ENCODE measurements at regions of chr11 and their contacts with region 1.

Region 1: DNA sequence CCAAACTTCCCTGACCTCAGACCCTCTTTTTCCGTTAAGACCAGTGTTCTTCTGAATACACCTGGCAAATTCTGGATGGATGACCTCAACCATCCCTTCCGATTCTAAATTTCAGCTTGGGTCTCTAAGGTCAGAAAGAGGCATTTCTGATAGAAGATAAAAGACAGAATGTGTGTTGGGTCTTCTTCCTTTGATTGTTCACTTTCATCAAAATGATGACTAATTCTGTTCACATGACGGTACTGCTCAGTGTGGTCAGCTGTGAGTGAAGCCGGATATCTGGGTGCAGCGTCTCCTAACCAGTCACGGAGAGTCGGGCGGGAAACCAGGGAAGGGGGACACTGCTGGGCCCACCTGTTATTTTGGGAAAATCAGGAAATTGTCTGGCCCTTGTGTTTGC is 151.6 kb upstream of the NAV2 start:
- DNase-seq: no peak
- H3K4me3 ChIP-seq: no peak overlapping the region
- H3K27ac ChIP-seq: no peak overlapping the region
- H3K4me1 ChIP-seq: no peaks in the 10 kb centered on the region
- H3K27me3 ChIP-seq: no peaks in the 10 kb centered on the region
- CTCF ChIP-seq: no peak
- POLR2A ChIP-seq: no peak

Region 2: DNA sequence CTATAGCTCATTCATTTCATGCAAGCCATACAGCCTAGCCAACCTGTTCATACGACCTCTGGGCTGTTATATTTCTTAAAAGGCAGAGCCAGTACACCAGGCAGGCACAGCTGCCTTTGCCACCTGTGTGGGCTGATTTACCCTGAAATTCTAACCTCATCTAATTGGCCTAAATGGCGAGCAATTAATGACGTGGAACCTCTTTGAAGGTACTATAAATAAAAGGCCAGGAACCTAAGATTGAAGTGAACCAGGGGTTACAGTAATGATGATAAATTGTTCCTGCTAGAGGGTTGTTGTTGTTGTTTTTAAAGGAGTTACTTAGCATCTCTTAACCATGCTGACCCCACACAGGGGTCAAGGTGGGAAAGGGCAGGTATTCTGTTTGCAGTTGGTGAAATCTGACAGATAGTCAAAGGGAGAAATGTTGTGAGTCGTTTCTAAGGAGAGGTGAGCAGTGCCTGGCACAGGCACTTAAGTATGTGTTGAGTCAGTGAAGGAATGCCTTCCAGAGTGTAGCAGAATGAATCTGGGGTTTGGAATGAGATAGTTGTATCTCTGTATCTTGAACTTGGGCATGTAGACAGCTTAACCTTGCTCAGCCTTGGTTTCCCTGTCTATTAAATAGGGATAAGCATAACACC is 61.9 kb before region 1 on chr11:
- intact Hi-C with region 1: no loop called
- DNase-seq: no peak
- H3K4me3 ChIP-seq: no peak overlapping the region
- H3K27ac ChIP-seq: no peak overlapping the region
- H3K4me1 ChIP-seq: no peaks in the 10 kb centered on the region
- H3K27me3 ChIP-seq: no peaks in the 10 kb centered on the region
- CTCF ChIP-seq: no peak
- POLR2A ChIP-seq: no peak

Region 3: DNA sequence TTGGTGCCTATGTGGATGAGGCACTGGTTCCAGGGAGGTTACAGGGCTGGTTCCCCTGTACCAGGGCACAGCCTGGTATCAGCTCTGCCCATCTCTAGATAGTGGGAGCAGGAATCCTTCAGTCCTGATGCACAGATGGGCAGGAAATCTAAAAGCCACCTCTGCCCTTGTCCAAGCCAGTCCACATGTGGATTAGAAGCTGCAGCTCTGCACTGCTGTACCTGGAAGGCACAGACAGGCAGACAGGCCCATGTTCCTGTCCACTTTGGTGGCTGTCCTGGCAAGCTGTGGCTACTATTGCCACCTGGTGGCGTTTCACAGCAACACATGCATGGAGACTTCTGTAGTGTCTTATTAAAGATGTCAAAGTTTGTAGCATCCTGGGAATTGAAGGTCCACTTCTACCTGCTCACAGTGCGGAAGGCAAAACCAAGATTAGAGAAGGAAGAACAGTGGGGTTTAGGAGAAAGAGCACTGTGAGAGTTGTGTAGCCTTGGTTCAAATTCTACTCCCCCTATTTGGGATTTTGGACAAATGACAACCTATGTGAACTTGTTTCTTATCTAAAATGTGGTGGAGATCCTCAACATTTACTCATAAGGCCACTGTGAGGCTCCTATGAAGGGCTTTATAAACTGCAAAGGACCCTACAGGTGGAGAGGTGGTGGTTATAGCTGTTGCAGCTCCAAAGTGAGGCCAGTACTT is 181.7 kb after region 1 on chr11:
- intact Hi-C with region 1: loop called (anchors 5 kb)
- DNase-seq: peak; percentile 76 to 80
- H3K4me3 ChIP-seq: no peak overlapping the region
- H3K27ac ChIP-seq: no peak overlapping the region
- H3K4me1 ChIP-seq: no peaks in the 10 kb centered on the region
- H3K27me3 ChIP-seq: no peaks in the 10 kb centered on the region
- CTCF ChIP-seq: peak; percentile 75 to 96 (median 90)
- POLR2A ChIP-seq: no peak

Region 4: DNA sequence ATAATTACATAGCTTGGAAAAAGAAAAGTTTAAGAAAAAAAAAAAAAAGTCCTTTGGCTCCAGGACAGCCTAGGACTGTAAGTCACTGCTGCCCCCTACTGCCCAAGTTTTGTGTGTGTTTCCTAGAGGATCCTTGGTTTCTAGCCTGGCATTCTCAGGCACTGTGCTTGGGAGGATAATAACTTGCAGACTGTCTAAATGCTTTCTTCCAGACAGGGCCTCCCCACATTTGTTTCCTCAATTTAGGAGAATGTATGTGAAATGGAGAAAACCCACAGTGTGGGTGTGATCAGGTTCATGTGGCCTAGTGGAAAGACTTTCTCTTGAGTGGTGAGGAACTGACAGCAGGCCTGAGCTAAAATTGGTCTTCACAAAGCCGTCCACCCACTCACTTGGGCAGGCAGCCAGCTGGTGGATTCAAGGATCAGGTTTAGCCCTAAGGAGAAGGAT is 342.6 kb after region 1 on chr11:
- intact Hi-C with region 1: loop called (anchors 2 kb)
- DNase-seq: peak; percentile 63 to 75
- H3K4me3 ChIP-seq: no peak overlapping the region
- H3K27ac ChIP-seq: peak overlapping the region in 1 of 2 donors; percentile 18
- H3K4me1 ChIP-seq: no peaks in the 10 kb centered on the region
- H3K27me3 ChIP-seq: no peaks in the 10 kb centered on the region
- CTCF ChIP-seq: peak; percentile 65 to 73 (median 70)
- POLR2A ChIP-seq: no peak